Heart right ventricle (tissue), 16 donors: ENCODE measurements at regions of chr16 and their contacts with region 1.

Region 1: GRCh38 chr16:28277537-28278388 is 14.6 kb upstream of the SBK1 start:
- DNase-seq: peak; percentile 80 to 84
- ATAC-seq: peak; percentile 85 to 94 (median 90)
- H3K4me3 ChIP-seq: peak overlapping the region; percentile 5 to 50 (median 36)
- H3K27ac ChIP-seq: peak overlapping the region in 1 of 10 donors; percentile 22
- H3K4me1 ChIP-seq: peaks cover 0 to 23% (median 9%) of the 10 kb centered on the region in 9 donors
- H3K27me3 ChIP-seq: peaks cover 0 to 14% (median 8%) of the 10 kb centered on the region in 7 donors
- CTCF ChIP-seq: peak; percentile 89 to 99 (median 98)

Region 2: GRCh38 chr16:27698266-27698665 is 579.5 kb before region 1 on chr16:
- intact Hi-C with region 1: no loop called
- DNase-seq: no peak
- ATAC-seq: no peak
- H3K4me3 ChIP-seq: no peak overlapping the region
- H3K27ac ChIP-seq: no peak overlapping the region
- H3K4me1 ChIP-seq: peaks cover 0 to 7% (median 0%) of the 10 kb centered on the region in 9 donors
- H3K27me3 ChIP-seq: no peaks in the 10 kb centered on the region
- CTCF ChIP-seq: peak in 4 of 9 donors; percentile 20 to 28 (median 26)

Region 3: GRCh38 chr16:27853101-27853500 is 424.7 kb before region 1 on chr16:
- intact Hi-C with region 1: no loop called
- DNase-seq: no peak
- ATAC-seq: peak in 1 of 8 donors; percentile 42
- H3K4me3 ChIP-seq: no peak overlapping the region
- H3K27ac ChIP-seq: no peak overlapping the region
- H3K4me1 ChIP-seq: peaks cover 0 to 12% (median 0%) of the 10 kb centered on the region in 9 donors
- H3K27me3 ChIP-seq: peaks cover 0 to 47% (median 12%) of the 10 kb centered on the region in 7 donors
- CTCF ChIP-seq: no peak

Region 4: DNA sequence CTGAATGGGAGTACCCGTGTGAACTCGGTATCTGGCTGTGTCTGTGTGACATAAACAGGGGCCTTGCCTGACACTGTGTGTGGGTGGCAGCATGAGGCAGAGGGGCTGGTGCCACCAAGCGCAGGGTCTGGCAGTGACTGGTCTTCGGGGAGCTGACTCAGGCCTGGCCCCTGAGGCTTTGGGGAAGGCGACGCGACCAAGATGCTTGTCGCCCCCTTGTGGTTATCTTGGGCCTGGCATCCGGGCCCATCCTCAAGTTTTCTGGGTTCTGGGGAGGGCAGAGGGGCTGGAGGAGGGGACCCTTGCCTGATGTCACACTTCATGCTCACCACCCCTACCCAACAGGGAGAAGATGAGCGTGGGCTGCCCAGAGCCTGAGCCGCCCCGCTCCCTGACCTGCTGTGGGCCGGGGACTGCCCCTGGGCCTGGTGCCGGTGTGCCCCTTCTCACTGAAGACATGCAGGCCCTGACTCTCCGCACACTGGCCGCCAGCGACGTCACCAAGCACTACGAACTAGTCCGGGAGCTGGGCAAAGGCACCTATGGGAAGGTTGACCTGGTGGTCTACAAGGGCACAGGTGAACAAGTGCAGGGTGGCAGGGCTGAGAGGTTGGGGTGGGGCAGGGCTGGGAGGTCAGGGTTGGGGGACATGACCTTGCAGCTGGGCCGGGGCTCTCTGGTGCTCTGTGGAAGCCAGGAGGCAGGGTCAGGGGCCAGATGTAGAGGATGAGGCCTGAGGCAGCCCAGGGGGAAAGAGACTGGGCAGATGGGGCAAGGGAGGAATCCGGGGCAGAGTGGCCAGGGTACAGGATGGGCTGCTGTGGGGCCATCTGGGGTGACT is 39.5 kb after region 1 on chr16:
- intact Hi-C with region 1: loop called (anchors 1 to 5 kb)
- DNase-seq: peak; percentile 42 to 46
- ATAC-seq: peak in 6 of 8 donors; percentile 37 to 61 (median 55)
- H3K4me3 ChIP-seq: no peak overlapping the region
- H3K27ac ChIP-seq: no peak overlapping the region
- H3K4me1 ChIP-seq: peaks cover 0 to 6% (median 0%) of the 10 kb centered on the region in 9 donors
- H3K27me3 ChIP-seq: peaks cover 0 to 4% (median 0%) of the 10 kb centered on the region in 7 donors
- CTCF ChIP-seq: peak; percentile 57 to 85 (median 82)